SK-N-SH (cell line): ENCODE measurements at regions of chr6 and their contacts with region 1.

Region 1: GRCh38 chr6:42532038-42532669 is 31.7 kb upstream of the UBR2 start:
- DNase-seq: peak; percentile 70
- H3K4me3 ChIP-seq: no peak overlapping the region; a peak in 1 of 4 replicates
- H3K27ac ChIP-seq: no peak overlapping the region
- H3K4me1 ChIP-seq: no peaks in the 10 kb centered on the region
- H3K27me3 ChIP-seq: no peaks in the 10 kb centered on the region
- CTCF ChIP-seq: peak; percentile 91
- EP300 ChIP-seq: no peak
- RAD21 ChIP-seq: peak; percentile 82

Region 2: DNA sequence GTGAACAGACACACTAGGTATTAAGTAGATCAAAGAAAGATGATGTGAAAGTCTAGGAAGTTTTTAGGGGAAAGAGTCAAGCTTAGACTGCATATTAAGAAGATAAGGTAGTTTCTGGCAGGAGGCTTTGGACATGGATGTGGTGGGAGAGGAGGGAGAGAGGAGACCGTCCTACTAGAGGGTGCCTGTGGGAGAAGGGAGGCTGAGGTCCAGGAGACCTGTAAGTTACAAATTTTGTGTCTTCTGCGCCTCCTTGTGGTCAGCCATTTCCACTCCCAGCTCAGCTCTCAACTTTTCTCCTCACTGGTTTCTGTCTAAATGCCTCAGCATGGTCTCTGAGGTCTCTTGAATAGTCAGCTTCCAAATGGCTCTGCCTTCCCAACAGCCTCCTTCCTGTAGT is 1686.6 kb before region 1 on chr6:
- CTCF ChIA-PET with region 1: no interaction called
- POLR2A ChIA-PET with region 1: no interaction called
- DNase-seq: no peak
- H3K4me3 ChIP-seq: no peak overlapping the region
- H3K27ac ChIP-seq: no peak overlapping the region
- H3K4me1 ChIP-seq: peaks cover 6% of the 10 kb centered on the region in 2 experiments; a peak in 2 of 4 replicates
- H3K27me3 ChIP-seq: no peaks in the 10 kb centered on the region
- CTCF ChIP-seq: peak; percentile 62
- EP300 ChIP-seq: no peak
- RAD21 ChIP-seq: peak; percentile 64

Region 3: GRCh38 chr6:42260972-42261371 is 271.2 kb before region 1 on chr6:
- CTCF ChIA-PET with region 1: interaction called, 17 read pairs
- POLR2A ChIA-PET with region 1: no interaction called
- DNase-seq: peak; percentile 83
- H3K4me3 ChIP-seq: no peak overlapping the region
- H3K27ac ChIP-seq: no peak overlapping the region
- H3K4me1 ChIP-seq: peaks cover 0 to 4% of the 10 kb centered on the region in 2 experiments; a peak in 1 of 4 replicates
- H3K27me3 ChIP-seq: no peaks in the 10 kb centered on the region
- CTCF ChIP-seq: peak; percentile 57
- EP300 ChIP-seq: no peak
- RAD21 ChIP-seq: peak; percentile 54

Region 4: GRCh38 chr6:42332916-42333315 is 199.2 kb before region 1 on chr6:
- CTCF ChIA-PET with region 1: interaction called, 11 read pairs
- POLR2A ChIA-PET with region 1: no interaction called
- DNase-seq: no peak
- H3K4me3 ChIP-seq: no peak overlapping the region
- H3K27ac ChIP-seq: no peak overlapping the region
- H3K4me1 ChIP-seq: no peaks in the 10 kb centered on the region
- H3K27me3 ChIP-seq: no peaks in the 10 kb centered on the region
- CTCF ChIP-seq: no peak
- EP300 ChIP-seq: no peak
- RAD21 ChIP-seq: no peak

Region 5: DNA sequence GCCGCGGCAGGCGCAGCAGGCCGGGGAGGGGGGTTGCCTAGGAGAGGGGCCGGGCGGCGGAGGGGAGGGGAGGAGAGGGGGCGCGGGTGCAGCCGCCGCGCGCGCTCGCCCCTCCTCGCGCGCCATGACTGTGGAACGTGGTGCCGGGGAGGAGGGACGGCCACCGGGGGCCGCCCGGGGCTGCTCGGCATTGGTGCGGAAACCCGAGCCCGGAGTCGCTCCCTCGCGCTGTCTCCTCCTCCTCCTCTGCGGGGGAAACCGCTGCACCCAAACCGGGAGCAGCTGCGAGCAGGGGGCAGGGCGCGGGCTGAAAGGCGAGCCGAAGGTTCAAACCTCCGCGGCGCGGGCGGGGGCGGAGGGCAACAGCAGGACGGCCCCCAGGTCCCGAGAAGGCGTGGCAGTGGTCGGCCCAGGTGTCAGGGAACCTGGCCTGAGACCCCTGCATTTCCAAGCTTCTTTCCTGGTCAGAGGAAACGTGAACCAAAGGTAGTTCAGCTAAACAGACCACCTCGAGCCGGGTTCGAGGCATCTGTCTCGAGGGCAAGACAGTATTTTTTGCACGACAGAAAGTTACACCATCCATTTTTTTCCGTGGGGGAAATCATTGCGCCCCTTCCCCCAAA is 79.0 kb before region 1 on chr6:
- CTCF ChIA-PET with region 1: interaction called, 13 read pairs
- POLR2A ChIA-PET with region 1: no interaction called
- DNase-seq: peak; percentile 92
- H3K4me3 ChIP-seq: peak overlapping the region; percentile 95 to 100
- H3K27ac ChIP-seq: peak overlapping the region; percentile 90 to 96
- H3K4me1 ChIP-seq: peaks cover 8 to 17% of the 10 kb centered on the region in 2 experiments; a peak in 3 of 4 replicates
- H3K27me3 ChIP-seq: no peaks in the 10 kb centered on the region
- CTCF ChIP-seq: no peak
- EP300 ChIP-seq: no peak; a peak in 2 of 4 replicates
- RAD21 ChIP-seq: no peak

Region 6: DNA sequence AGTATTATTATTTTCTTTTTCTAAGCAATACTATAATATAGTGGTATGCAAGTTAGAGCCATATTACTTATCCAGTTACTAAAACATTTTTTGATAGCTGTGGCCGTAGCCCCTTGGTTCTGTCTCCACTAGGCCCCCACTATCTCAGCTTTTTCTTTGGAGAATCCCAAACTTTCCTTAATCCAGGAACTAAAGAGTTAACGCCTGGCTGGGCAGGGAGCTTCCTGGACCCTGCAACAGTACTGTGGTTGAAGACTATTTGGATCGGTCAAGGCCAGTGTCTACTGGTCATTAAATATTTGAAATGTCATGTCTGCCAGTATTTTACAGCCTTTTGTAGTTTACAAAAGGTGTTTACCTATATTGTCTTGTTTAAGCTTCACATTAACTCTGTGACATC is 60.4 kb before region 1 on chr6:
- CTCF ChIA-PET with region 1: no interaction called
- POLR2A ChIA-PET with region 1: no interaction called
- DNase-seq: no peak
- H3K4me3 ChIP-seq: no peak overlapping the region
- H3K27ac ChIP-seq: no peak overlapping the region
- H3K4me1 ChIP-seq: no peaks in the 10 kb centered on the region
- H3K27me3 ChIP-seq: no peaks in the 10 kb centered on the region
- CTCF ChIP-seq: no peak
- EP300 ChIP-seq: no peak
- RAD21 ChIP-seq: no peak

Region 7: DNA sequence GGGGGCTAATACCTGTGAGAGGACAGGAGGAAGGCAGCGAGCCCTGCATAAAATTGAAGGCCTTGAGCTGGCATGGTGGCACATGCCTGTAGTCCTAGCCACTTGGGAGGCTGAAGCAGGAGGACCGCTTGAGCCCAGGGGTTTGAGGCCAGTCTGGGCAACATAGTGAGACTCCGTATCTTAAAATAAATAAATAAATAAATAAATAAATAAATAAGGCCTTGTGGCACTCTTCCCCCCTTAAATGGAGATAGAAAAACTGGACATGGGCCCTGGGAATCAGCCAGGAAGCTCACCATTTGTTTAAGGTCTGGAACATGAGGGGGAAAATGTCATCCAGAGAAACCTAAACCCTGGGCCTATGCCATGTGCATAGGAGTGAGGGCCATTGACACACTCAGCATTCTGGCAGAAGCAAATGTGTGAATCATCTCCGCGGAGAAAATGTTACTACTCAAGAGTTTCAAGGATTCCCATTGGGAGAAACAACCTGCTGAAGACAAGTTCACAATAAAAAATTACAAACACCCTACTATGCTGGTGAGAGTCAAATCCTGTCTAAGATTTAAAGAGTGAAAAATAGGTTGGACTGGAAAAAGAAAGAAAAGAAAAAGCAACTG is 20.2 kb before region 1 on chr6:
- CTCF ChIA-PET with region 1: interaction called, 22 read pairs
- POLR2A ChIA-PET with region 1: no interaction called
- DNase-seq: no peak
- H3K4me3 ChIP-seq: no peak overlapping the region
- H3K27ac ChIP-seq: peak overlapping the region in 1 of 2 experiments; percentile 44; a peak in 1 of 4 replicates
- H3K4me1 ChIP-seq: peaks cover 8 to 9% of the 10 kb centered on the region in 2 experiments; a peak in 3 of 4 replicates
- H3K27me3 ChIP-seq: no peaks in the 10 kb centered on the region
- CTCF ChIP-seq: no peak
- EP300 ChIP-seq: no peak
- RAD21 ChIP-seq: no peak

Region 8: GRCh38 chr6:42520786-42521607 is 11.2 kb before region 1 on chr6:
- CTCF ChIA-PET with region 1: interaction called, 19 read pairs
- POLR2A ChIA-PET with region 1: no interaction called
- DNase-seq: no peak
- H3K4me3 ChIP-seq: no peak overlapping the region
- H3K27ac ChIP-seq: peak overlapping the region; percentile 29 to 56; a peak in 3 of 4 replicates
- H3K4me1 ChIP-seq: 0 out of 4 replicates have a peak, but pooled peaks cover 0 to 5% of the 10 kb centered on the region in 2 experiments
- H3K27me3 ChIP-seq: no peaks in the 10 kb centered on the region
- CTCF ChIP-seq: no peak
- EP300 ChIP-seq: peak in 1 of 2 experiments; percentile 36; a peak in 1 of 4 replicates
- RAD21 ChIP-seq: no peak

Region 9: DNA sequence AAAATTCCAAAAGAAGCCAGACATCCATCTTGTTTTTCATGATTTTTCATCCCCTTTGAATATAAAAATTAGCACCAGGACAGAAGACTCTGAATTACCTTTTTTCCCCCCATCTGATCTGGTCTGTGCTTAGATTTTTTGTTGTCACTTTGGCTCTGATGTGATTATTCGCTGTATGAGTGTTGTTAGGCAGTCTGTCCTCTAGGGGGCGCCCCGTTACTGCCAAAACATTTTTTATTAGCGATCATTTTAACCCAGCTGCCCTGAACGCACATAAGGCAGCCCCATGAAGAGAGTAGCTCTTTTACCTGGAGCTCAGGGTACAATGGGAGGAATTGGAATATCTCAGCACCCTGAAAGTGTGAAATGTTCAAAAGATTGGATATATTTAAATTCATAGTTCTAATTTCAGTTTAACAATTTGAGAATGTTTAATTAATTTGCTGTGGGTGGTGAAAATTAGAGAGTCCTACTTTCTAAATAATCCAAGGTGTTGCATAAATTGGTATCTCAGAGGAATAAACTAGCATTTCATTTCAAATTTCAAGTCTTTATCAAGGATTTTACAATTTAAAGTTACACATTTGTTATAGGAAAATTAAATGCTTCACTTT is 129.5 kb after region 1 on chr6:
- CTCF ChIA-PET with region 1: no interaction called
- POLR2A ChIA-PET with region 1: no interaction called
- DNase-seq: peak; percentile 65
- H3K4me3 ChIP-seq: no peak overlapping the region; a peak in 1 of 4 replicates
- H3K27ac ChIP-seq: no peak overlapping the region
- H3K4me1 ChIP-seq: no peaks in the 10 kb centered on the region
- H3K27me3 ChIP-seq: no peaks in the 10 kb centered on the region
- CTCF ChIP-seq: peak; percentile 96
- EP300 ChIP-seq: no peak
- RAD21 ChIP-seq: peak; percentile 90

Region 10: GRCh38 chr6:42766141-42766670 is 234.1 kb after region 1 on chr6:
- CTCF ChIA-PET with region 1: no interaction called
- POLR2A ChIA-PET with region 1: no interaction called
- DNase-seq: no peak
- H3K4me3 ChIP-seq: no peak overlapping the region
- H3K27ac ChIP-seq: peak overlapping the region in 1 of 2 experiments; percentile 90; a peak in 2 of 4 replicates
- H3K4me1 ChIP-seq: 0 out of 4 replicates have a peak, but pooled peaks cover 0 to 10% of the 10 kb centered on the region in 2 experiments
- H3K27me3 ChIP-seq: no peaks in the 10 kb centered on the region
- CTCF ChIP-seq: no peak
- EP300 ChIP-seq: 0 out of 4 replicates have a peak, but pooled peaks of 1 of the 2 experiments have one; percentile 34
- RAD21 ChIP-seq: no peak